IMR-90 (cell line): ENCODE measurements at regions of chr5 and their contacts with region 1.

Region 1: DNA sequence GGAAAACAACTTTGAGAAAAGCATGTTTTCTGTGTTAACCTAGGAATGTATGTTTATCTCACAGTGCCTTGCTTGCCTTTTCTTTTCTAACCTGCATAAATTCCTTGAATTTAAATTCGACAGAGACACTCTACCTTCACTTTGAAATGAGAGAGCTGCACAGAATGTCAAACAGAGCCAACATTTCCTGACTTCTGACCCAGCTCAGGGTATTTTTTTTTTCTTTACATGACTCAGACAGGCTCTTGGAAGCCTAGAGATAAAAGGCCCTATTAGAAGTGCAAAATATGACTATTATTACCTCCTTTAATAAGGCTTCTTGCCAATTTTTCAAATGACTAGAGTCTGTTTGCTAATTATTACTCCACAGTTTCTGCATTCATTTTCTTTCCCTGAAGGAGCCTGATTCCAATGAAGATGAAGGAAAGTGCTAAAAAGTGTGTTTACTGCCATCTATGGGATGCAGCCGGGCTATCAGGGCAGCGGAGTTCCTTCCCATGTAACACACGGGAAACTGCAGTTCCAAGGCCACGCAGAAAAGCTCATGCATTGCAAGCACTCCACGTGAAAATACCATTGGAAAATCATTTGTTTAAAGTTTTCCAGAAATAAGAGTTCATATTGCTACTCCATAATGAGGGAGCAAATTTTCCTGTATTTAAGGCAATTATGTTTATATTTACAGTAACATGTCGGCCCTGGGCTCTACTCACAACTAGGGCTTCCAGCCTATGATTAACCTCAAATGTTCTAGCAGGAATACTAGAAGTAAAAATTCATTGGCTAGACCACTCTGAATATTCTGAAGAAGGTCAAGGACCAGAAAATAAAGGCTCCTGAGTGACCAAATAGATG is 485.6 kb downstream of the ZSWIM6 start:
- DNase-seq: peak; percentile 39
- ATAC-seq: peak; percentile 94
- H3K4me3 ChIP-seq: no peak overlapping the region
- H3K27ac ChIP-seq: no peak overlapping the region
- H3K4me1 ChIP-seq: no peaks in the 10 kb centered on the region
- H3K27me3 ChIP-seq: peaks cover 2% of the 10 kb centered on the region
- CTCF ChIP-seq: peak; percentile 57
- POLR2A ChIP-seq: no peak
- RAD21 ChIP-seq: peak; percentile 52

Region 2: GRCh38 chr5:61162010-61162831 is 655.5 kb before region 1 on chr5 and contains the start of gene SMIM15:
- CTCF ChIA-PET with region 1: no interaction called
- POLR2A ChIA-PET with region 1: no interaction called
- dilution Hi-C with region 1: no loop called
- in situ Hi-C with region 1: no loop called
- intact Hi-C with region 1: loop called (anchors 10 kb)
- DNase-seq: peak; percentile 87
- ATAC-seq: peak; percentile 95
- H3K4me3 ChIP-seq: peak within 1 kb of the TSS; percentile 94
- H3K27ac ChIP-seq: peak within 1 kb of the TSS; percentile 95
- H3K4me1 ChIP-seq: peaks cover 5% of the 10 kb centered on the region
- H3K27me3 ChIP-seq: no peaks in the 10 kb centered on the region
- CTCF ChIP-seq: no peak
- POLR2A ChIP-seq: peak; percentile 70
- RAD21 ChIP-seq: 0 out of 2 replicates have a peak, but pooled peaks have one; percentile 3
- total RNA-seq, gene SMIM15: 94.3 and 101 TPM in 2 replicates

Region 3: DNA sequence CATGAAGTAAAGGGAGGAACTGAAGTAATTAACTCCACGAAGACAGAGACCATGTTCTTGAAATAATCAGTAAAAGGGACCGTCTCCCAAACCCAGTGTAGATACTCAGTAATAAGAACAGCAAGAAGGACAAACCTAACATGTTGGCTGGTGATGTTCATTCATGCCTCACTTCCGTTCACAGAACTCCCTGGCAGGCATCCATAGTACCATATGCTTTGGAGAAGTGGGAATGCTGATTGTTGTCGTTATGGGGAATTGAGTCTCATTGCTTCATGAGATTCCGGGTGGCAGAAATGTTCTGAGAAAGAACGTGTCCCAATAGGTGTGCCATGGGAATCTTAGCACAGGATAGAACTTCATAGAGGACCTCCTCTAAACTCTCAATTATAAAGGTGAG is 33.4 kb before region 1 on chr5:
- CTCF ChIA-PET with region 1: no interaction called
- POLR2A ChIA-PET with region 1: no interaction called
- dilution Hi-C with region 1: no loop called
- in situ Hi-C with region 1: no loop called
- intact Hi-C with region 1: no loop called
- DNase-seq: no peak
- ATAC-seq: no peak
- H3K4me3 ChIP-seq: no peak overlapping the region
- H3K27ac ChIP-seq: no peak overlapping the region
- H3K4me1 ChIP-seq: no peaks in the 10 kb centered on the region
- H3K27me3 ChIP-seq: no peaks in the 10 kb centered on the region; the same call in 1 of the 2 replicates
- CTCF ChIP-seq: no peak
- POLR2A ChIP-seq: no peak
- RAD21 ChIP-seq: no peak

Region 4: GRCh38 chr5:62143268-62144229 is 325.9 kb after region 1 on chr5:
- CTCF ChIA-PET with region 1: no interaction called
- POLR2A ChIA-PET with region 1: no interaction called
- dilution Hi-C with region 1: no loop called
- in situ Hi-C with region 1: no loop called
- intact Hi-C with region 1: loop called (anchors 5 kb)
- DNase-seq: peak; percentile 40
- ATAC-seq: peak; percentile 72
- H3K4me3 ChIP-seq: no peak overlapping the region
- H3K27ac ChIP-seq: no peak overlapping the region
- H3K4me1 ChIP-seq: no peaks in the 10 kb centered on the region
- H3K27me3 ChIP-seq: no peaks in the 10 kb centered on the region; the same call in none of the 2 replicates
- CTCF ChIP-seq: peak; percentile 55
- POLR2A ChIP-seq: no peak
- RAD21 ChIP-seq: peak; percentile 27; the same call in 1 of the 2 replicates